ENCODE measurements at regions of chr2 and their contacts with region 1.

Region 1: DNA sequence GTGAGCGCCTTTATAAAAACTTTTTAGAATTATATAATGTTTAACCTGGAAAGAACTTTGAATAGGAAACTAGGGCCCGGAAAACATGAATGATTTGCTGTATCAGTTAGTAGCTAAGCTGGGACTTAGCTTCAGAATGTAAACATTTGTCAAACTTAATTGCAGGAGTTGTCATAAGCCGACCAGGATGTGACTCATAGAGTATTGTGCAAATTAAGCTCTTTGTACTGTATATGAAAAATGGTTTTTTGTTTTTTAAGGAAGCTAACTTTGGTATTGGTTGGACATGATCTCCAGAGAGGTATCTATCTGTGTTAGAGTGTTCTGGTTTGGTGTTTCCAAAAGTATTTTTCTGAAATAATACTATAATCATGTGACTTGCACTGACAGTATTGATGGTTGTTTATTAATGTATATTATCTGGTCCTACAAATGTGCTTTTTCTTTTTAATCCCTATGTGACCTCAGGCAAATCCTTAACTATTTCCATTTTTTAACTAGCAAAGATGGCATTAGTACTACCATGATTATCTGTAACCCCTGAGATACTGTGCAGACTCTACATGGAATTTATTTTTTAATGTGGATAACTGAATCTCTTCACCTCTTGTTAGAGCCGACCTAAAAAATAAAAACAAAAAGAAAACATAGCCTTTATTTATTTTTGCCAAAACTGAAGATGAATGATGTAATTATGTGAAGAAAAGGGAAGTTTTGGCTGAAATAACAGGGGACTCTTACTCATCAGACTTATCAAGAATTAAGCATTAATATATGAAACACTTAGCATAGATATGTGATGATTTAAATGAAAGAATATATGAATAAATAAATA is 11.7 kb downstream of the YIPF4 start:
- DNase-seq: peak; percentile 79 to 95 (median 91)
- H3K4me3 ChIP-seq: peak overlapping the region in 1 of 3 experiments; percentile 58
- H3K4me3 Mint-ChIP-seq: peak overlapping the region in 1 of 2 donors; percentile 55
- H3K27ac ChIP-seq: peak overlapping the region; percentile 81 to 97
- H3K27ac Mint-ChIP-seq: peak overlapping the region; percentile 90 to 97 (median 94)
- H3K4me1 ChIP-seq: peaks cover 20 to 36% of the 10 kb centered on the region in 2 donors
- H3K4me1 Mint-ChIP-seq: peaks cover 30% of the 10 kb centered on the region
- H3K27me3 ChIP-seq: no peaks in the 10 kb centered on the region
- H3K27me3 Mint-ChIP-seq: no peaks in the 10 kb centered on the region
- CTCF ChIP-seq: no peak

Region 2: DNA sequence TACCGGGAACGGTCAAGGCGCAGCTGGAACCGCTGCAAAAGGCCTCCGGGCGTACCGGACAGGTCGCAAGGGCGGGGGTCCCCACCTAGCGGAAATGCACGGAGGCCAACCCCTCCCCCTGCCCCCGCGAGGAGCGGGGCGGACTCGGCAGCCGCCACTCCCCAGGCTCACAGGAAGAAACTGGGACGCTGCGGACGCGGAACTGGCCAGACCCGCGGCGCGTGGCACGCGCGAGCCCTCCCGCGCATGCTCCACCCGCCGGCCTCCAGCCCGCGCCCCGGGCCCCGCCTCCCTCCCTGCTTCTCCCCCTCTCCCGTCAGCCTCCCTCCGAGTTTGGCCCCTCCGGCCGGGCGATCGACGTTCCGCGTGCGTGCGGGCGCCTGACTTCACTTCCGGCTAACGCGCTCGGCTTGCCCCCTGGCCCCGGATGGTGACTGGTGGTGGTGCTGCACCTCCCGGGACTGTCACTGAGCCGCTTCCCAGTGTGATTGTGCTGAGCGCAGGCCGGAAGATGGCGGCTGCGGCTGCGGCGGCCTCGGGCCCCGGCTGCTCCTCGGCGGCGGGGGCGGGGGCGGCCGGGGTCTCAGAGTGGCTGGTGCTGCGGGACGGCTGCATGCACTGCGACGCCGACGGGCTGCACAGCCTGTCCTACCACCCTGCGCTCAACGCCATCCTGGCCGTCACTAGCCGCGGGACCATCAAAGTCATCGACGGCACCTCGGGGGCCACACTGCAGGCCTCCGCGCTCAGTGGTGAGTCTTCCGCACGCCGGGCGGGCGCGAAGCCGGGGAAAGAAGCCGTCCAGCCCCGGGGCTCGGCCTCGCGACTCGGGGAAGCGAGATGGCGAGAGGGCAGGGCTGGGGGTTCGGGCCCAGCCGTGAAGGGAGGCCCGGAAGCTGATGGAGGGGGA is 67.6 kb after region 1 on chr2 and contains the start of gene BIRC6:
- intact Hi-C with region 1: loop called in 1 of 2 experiments (anchors 5 kb)
- DNase-seq: peak; percentile 95 to 99 (median 98)
- H3K4me3 ChIP-seq: peak within 1 kb of the TSS; percentile 89 to 94 (median 89)
- H3K4me3 Mint-ChIP-seq: peak within 1 kb of the TSS; percentile 91 to 94
- H3K27ac ChIP-seq: peak within 1 kb of the TSS; percentile 96 to 99
- H3K27ac Mint-ChIP-seq: peak within 1 kb of the TSS; percentile 94 to 98 (median 96)
- H3K4me1 ChIP-seq: peaks cover 26% of the 10 kb centered on the region in 2 donors
- H3K4me1 Mint-ChIP-seq: peaks cover 34% of the 10 kb centered on the region
- H3K27me3 ChIP-seq: no peaks in the 10 kb centered on the region
- H3K27me3 Mint-ChIP-seq: peaks cover 0 to 2% (median 0%) of the 10 kb centered on the region in 3 donors
- CTCF ChIP-seq: no peak
- polyA plus RNA-seq, gene BIRC6: 11.5 to 32.6 (median 12.9) TPM